ENCODE measurements at regions of chr5 and their contacts with region 1.

Region 1: GRCh38 chr5:1344975-1345838 is at the start of gene CLPTM1L:
- DNase-seq: peak; percentile 92 to 96
- ATAC-seq: peak; percentile 94
- H3K4me3 ChIP-seq: peak within 1 kb of the TSS; percentile 89 to 97
- H3K27ac ChIP-seq: peak within 1 kb of the TSS in 1 of 2 donors; percentile 58
- H3K4me1 ChIP-seq: no peaks in the 10 kb centered on the region
- H3K27me3 ChIP-seq: no peaks in the 10 kb centered on the region
- total RNA-seq, gene CLPTM1L: 66.0 to 71.2 TPM

Region 2: DNA sequence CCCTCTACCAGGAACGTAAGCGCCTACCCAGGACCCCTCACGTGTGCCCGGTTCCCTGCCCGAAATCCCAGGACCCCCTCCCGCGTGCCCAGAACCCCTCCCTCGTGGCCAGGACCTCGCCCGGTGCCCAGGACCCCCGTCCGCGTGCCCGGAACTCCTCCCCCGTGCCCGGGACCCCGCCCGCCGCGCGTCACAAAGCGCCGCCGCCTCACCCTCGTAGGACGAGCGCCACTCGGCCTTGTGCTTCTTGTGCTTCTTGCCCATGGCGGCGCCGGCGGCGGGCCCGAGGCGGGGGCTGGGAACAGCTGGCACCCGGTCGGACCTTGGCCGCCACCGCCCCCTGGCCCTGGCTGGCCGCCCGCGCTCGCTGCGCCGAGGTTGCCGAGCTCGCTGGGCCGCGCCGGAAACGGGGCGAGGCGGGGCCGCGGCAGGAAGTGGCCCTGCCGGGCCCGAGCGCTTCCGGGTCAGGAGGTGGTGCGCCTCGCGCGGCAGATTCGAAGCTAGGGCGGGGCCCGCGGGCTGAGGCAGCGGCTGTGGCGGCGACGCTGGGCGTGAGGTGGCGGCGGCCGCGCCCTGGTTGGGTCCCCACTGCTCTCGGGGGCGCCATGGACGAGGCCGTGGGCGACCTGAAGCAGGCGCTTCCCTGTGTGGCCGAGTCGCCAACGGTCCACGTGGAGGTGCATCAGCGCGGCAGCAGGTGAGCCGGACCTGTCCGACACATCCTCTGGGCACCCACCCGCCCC is 452.6 kb before region 1 on chr5 and contains the starts of genes BRD9 and TRIP13:
- intact Hi-C with region 1: loop called in 1 of 2 experiments (anchors 10 kb)
- DNase-seq: peak; percentile 89 to 95
- ATAC-seq: peak; percentile 94
- H3K4me3 ChIP-seq: peak within 1 kb of the TSS; percentile 55 to 63
- H3K27ac ChIP-seq: peak within 1 kb of the TSS; percentile 41 to 43
- H3K4me1 ChIP-seq: no peaks in the 10 kb centered on the region
- H3K27me3 ChIP-seq: no peaks in the 10 kb centered on the region
- total RNA-seq, gene BRD9: 38.2 to 39.7 TPM
- total RNA-seq, gene TRIP13: 0.84 to 1.3 TPM

Region 3: GRCh38 chr5:1385395-1386273 is 40.4 kb after region 1 on chr5:
- intact Hi-C with region 1: no loop called
- DNase-seq: peak; percentile 93 to 94
- ATAC-seq: peak; percentile 85
- H3K4me3 ChIP-seq: peak overlapping the region; percentile 31 to 38
- H3K27ac ChIP-seq: no peak overlapping the region
- H3K4me1 ChIP-seq: no peaks in the 10 kb centered on the region
- H3K27me3 ChIP-seq: no peaks in the 10 kb centered on the region

Region 4: DNA sequence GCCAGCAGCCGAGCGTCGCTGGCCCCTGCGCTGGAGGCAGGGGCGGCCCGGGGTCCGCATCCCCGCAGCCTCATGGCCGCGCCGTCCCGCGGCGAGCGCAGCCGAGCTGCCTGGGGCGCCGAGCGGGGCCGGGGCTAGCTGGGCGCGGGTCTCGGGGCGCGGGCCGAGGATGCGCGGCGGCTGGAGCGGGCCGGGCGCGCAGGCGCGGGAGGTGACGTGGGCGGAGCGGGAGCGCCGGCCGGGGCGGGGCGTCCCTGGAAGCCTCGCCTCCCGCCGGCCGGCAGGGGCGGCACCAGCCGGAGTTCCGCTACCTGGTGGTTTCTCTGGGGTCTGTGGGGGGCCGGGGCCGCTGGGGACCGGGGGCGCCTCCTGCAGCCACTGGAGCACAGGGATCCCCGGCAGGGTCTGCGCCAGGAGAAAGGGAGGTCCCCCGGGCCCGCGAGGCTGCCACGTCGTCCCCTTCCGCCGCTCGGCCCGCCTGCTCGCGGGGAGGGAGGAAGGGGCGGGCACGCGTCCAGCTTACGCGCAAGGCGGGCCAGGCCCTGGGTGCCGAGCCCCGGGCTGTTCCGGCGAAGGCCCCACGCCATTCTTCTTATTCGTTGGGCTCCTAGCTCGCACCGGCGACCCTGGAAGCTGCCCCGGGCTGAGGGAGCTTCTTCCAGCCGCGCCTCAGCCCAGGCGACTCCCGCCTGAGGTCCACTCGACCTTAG is 178.7 kb after region 1 on chr5 and contains the start of gene LPCAT1:
- intact Hi-C with region 1: loop called in 1 of 2 experiments (anchors 10 kb)
- DNase-seq: peak; percentile 90 to 95
- ATAC-seq: peak; percentile 92
- H3K4me3 ChIP-seq: peak within 1 kb of the TSS; percentile 97 to 100
- H3K27ac ChIP-seq: peak within 1 kb of the TSS; percentile 7 to 9
- H3K4me1 ChIP-seq: no peaks in the 10 kb centered on the region
- H3K27me3 ChIP-seq: no peaks in the 10 kb centered on the region
- total RNA-seq, gene LPCAT1: 38.7 to 68.7 TPM

Region 5: GRCh38 chr5:1633605-1634336 is 288.6 kb after region 1 on chr5:
- intact Hi-C with region 1: loop called in 1 of 2 experiments (anchors 5 kb)
- DNase-seq: peak; percentile 93 to 94
- ATAC-seq: peak; percentile 96
- H3K4me3 ChIP-seq: peak overlapping the region; percentile 53 to 57
- H3K27ac ChIP-seq: peak overlapping the region; percentile 28 to 53
- H3K4me1 ChIP-seq: no peaks in the 10 kb centered on the region
- H3K27me3 ChIP-seq: no peaks in the 10 kb centered on the region

Region 6: GRCh38 chr5:1641560-1642166 is 296.5 kb after region 1 on chr5:
- intact Hi-C with region 1: loop called in 1 of 2 experiments (anchors 10 kb)
- DNase-seq: peak; percentile 85 to 90
- ATAC-seq: peak; percentile 65
- H3K4me3 ChIP-seq: no peak overlapping the region
- H3K27ac ChIP-seq: no peak overlapping the region
- H3K4me1 ChIP-seq: no peaks in the 10 kb centered on the region
- H3K27me3 ChIP-seq: peaks cover 0 to 2% of the 10 kb centered on the region in 2 donors

Region 7: DNA sequence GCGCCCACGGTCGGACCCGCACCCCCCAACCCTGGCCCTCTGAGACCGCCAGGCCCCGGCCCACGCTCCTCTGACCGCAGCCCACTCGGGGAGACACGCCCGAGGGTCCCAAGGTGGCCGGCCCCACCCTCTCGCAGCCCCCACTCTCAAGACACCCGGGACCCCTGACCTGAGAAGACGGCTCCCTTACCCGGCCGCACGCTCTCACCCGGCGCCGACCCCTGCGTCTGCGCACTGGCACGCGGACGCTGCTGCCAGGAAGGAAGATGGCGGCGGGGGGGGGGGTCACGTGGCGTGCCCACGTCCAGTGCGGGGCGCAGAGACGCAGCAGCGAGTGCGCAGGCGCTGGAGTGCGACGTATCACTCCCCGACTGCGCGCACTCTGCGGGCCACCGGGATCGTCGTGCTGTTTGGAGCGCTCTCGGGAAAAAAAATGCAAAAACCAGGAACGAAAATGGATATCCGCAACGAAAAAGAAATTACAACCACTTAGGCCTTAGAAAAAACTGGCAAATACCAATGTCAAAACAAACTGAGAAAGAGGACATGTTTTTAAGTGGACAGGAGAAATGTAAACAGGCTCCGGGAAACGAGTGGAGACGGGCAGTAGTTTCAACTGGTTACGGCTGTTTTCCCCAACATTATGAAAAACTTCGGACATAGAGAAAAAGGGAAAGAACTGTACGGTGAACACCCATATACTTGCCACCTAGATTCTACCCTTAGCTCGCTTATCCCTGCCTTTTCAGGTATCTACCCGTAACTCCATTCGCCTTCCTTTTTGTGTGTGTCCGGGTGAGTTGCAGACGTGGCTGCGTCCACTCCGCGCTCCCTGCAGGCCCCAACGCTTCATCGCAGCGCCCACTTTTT is 454.6 kb after region 1 on chr5 and contains the start of gene MRPL36:
- intact Hi-C with region 1: loop called in 1 of 2 experiments (anchors 10 kb)
- DNase-seq: peak; percentile 95 to 96
- ATAC-seq: peak; percentile 96
- H3K4me3 ChIP-seq: peak within 1 kb of the TSS; percentile 64 to 75
- H3K27ac ChIP-seq: peak within 1 kb of the TSS in 1 of 2 donors; percentile 30
- H3K4me1 ChIP-seq: no peaks in the 10 kb centered on the region
- H3K27me3 ChIP-seq: no peaks in the 10 kb centered on the region
- total RNA-seq, gene MRPL36: 25.1 to 28.5 TPM

Measured in aorta (tissue), 5 donors.